ENCODE measurements at regions of chr3 and their contacts with region 1.

Region 1: DNA sequence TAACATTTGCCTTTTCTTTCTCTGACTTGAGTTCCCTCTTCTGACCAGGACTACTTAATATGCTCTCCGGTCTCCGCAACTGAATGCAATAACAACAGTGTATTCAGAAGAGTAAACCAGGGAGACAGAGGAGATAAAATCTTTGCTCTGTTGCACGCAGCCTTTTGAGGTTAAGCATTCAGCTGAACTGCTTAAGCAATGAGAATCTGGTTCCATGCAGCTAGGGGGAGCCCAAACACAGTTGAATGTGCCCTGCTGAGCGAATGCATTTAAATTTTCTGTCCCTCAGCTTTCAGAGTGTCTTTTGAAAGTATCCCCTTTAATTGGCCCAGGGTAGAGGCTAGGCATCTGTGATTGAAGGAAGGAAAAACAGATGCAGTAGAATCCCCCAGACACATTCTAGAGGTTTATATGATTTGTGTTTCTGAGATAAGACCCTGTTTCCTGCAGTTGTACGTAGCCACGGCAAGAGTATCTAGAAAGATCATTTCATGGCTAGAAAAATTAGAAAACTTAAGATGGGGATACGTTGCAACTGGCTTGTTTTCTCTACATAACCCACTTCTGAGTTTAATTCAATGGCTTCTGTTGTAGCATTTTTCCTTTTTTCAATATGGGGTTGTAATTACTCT is 309.6 kb downstream of the TUSC7 start:
- DNase-seq: peak; percentile 56
- H3K4me3 ChIP-seq: no peak overlapping the region
- H3K27ac ChIP-seq: no peak overlapping the region
- H3K4me1 ChIP-seq: no peaks in the 10 kb centered on the region
- H3K27me3 ChIP-seq: peaks cover 5% of the 10 kb centered on the region
- CTCF ChIP-seq: peak; percentile 63 to 74 (median 68)
- EP300 ChIP-seq: no peak
- POLR2A ChIP-seq: no peak

Region 2: GRCh38 chr3:117047951-117048705 is 28.9 kb after region 1 on chr3:
- in situ Hi-C with region 1: no loop called
- intact Hi-C with region 1: loop called (anchors 1 kb)
- DNase-seq: no peak
- H3K4me3 ChIP-seq: no peak overlapping the region
- H3K27ac ChIP-seq: no peak overlapping the region
- H3K4me1 ChIP-seq: peaks cover 0 to 9% (median 0%) of the 10 kb centered on the region in 4 donors
- H3K27me3 ChIP-seq: no peaks in the 10 kb centered on the region
- CTCF ChIP-seq: no peak
- EP300 ChIP-seq: no peak
- POLR2A ChIP-seq: no peak

Region 3: DNA sequence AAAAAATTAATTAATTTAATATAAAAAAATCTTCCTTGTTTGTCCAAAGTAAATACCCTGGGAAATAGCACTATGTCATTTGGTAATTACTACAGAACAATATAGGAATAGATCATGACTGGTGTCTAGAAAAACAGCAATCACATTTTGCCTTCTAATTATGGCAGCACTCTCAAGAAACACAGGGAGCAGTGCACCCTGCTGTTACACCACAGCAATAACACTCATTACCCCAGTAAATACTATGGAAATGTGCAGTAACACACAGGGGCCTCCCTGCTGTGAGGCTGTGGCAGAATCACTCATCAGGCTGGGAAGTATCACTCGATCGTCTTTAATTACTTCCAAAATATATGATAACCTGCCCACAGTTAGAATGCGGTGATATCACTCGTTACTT is 336.4 kb after region 1 on chr3:
- in situ Hi-C with region 1: loop called in 2 of 4 experiments (anchors 25 kb)
- intact Hi-C with region 1: no loop called
- DNase-seq: no peak
- H3K4me3 ChIP-seq: no peak overlapping the region
- H3K27ac ChIP-seq: no peak overlapping the region
- H3K4me1 ChIP-seq: no peaks in the 10 kb centered on the region
- H3K27me3 ChIP-seq: no peaks in the 10 kb centered on the region
- CTCF ChIP-seq: peak; percentile 40 to 62 (median 56)
- EP300 ChIP-seq: no peak
- POLR2A ChIP-seq: no peak

Region 4: GRCh38 chr3:117526470-117527079 is 507.4 kb after region 1 on chr3:
- in situ Hi-C with region 1: loop called in 3 of 4 experiments (anchors 25 kb)
- intact Hi-C with region 1: no loop called
- DNase-seq: peak; percentile 30
- H3K4me3 ChIP-seq: no peak overlapping the region
- H3K27ac ChIP-seq: no peak overlapping the region
- H3K4me1 ChIP-seq: no peaks in the 10 kb centered on the region
- H3K27me3 ChIP-seq: no peaks in the 10 kb centered on the region
- CTCF ChIP-seq: peak; percentile 45 to 68 (median 59)
- EP300 ChIP-seq: no peak
- POLR2A ChIP-seq: no peak

Region 5: DNA sequence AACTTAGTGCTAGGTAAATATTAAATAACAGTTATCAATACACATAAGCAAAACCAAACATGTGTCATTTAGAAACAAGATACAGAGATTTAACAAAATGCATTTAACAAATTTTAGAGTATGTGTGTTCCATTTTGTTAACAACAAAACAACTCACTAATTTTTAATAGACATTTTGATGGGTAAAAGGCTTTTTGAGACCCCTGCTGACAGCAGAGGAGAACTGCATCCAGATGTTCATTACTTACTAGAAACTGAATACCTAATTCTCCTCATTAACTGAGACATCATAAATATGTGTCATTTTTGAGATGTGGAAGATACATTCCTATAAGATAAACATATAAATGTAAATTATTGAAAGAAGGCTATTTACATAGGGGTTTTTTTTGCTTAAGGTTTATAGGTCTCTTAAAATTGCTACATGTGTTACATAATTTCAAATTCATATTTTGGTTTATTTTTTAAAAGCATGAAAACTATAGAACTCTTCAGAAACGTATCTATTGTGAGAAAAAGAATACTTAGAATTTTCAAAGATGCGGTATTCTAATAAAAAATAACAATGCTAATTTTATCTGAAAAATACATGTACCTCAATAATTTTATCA is 700.2 kb after region 1 on chr3:
- in situ Hi-C with region 1: loop called in 1 of 4 experiments (anchors 25 kb)
- intact Hi-C with region 1: no loop called
- DNase-seq: no peak
- H3K4me3 ChIP-seq: no peak overlapping the region
- H3K27ac ChIP-seq: no peak overlapping the region
- H3K4me1 ChIP-seq: no peaks in the 10 kb centered on the region
- H3K27me3 ChIP-seq: no peaks in the 10 kb centered on the region
- CTCF ChIP-seq: peak; percentile 44 to 63 (median 55)
- EP300 ChIP-seq: no peak
- POLR2A ChIP-seq: no peak